MCF 10A (cell line): ENCODE measurements at regions of chr2 and their contacts with region 1.

Region 1: DNA sequence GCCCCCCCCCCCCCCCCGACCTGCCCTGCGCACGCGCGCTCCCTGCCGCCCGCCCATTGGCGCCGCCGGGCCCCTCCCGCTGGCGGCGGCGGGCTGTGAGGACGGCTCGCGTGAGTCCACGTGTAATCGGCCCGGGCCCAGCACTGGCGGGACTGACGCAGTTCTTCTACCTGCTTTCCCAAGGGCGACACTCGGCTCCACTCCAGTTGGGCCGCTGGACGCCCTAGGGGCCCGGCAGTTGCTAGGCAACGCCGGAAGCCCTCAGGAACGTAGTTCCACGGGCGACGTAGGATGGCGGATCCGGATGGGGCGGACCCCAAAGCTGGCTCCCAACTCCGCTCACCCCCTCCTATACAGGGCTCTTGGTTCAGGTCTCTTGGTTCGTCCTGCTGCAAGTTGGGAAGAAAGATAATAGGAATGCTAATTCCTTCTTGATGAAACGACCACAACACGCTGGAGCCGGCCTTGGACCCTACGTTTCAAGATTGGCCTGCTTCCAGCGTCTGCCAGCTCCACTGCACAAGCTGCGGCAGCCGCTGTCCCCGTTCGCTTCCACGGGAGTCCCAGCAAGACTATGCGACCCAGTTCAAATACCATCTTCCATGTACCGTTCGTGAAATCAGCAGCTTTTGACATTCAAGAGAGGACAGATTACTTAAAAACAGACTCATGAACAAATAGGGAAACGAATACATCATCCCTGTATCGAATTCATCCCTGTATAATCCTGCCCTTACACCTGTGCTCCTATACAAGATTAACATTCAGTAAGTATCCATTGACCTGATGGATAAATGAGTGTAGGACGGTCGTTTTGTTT is 415 bp upstream of the MCFD2 start:
- DNase-seq: peak; percentile 86
- H3K4me3 Mint-ChIP-seq: peak overlapping the region; percentile 82
- H3K27ac Mint-ChIP-seq: peak overlapping the region; percentile 63
- H3K4me1 Mint-ChIP-seq: peaks cover 42% of the 10 kb centered on the region
- H3K27me3 Mint-ChIP-seq: no peaks in the 10 kb centered on the region
- CTCF ChIP-seq: no peak

Region 2: DNA sequence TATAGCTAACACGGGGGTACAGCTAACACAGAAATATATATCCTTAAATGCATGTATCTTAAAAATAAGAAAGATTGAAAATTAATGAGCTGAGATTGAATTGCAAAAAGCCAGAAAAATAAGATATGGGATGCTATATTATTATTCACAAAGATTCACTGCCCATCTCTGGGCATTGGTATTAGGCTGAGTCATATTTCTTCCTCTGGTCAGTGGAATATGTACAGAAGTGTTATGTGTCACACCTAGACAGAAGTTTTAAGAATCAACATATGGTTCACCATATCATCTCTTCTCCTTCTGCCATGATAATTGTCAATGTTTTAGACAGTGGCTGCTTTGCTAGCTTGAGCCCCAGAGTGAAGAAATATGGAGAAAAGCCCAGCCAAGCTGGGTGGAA is 13.6 kb after region 1 on chr2:
- CTCF ChIA-PET with region 1: interaction called, 23 read pairs
- POLR2A ChIA-PET with region 1: interaction called, 17 read pairs
- intact Hi-C with region 1: no loop called
- DNase-seq: no peak
- H3K4me3 Mint-ChIP-seq: no peak overlapping the region
- H3K27ac Mint-ChIP-seq: no peak overlapping the region
- H3K4me1 Mint-ChIP-seq: no peaks in the 10 kb centered on the region
- H3K27me3 Mint-ChIP-seq: no peaks in the 10 kb centered on the region
- CTCF ChIP-seq: no peak

Region 3: DNA sequence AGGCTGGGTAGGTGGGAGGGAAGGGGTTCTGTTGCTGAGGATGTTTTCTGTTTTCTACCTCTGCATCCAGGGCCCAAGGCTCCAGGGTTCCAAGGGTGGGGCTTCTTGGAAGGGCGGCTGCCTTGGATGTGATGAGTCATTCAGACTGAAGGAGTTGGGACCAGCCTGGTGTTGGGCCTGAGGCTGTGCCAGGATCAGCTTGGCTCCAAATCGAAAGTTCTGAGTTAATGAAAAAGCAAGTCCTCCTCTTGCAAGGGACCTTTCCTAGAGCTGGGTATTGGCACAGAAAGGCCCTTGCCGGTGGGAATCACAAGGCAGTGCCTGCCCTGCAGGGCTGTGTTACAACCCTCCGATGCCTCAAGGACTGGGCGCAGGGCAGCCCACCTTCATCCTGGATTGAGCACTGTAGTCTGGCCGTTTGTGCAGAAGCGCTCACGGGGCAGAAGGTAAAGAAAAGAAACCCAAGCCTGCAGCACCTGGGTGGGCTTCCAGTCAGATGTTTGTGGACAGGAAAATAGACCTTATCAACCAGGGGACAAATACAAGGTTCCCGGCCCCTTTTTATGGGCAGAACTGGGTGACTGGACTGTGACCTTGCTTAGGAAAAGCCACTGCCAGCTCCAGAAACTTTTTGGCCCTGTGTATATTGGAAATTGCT is 52.1 kb after region 1 on chr2:
- CTCF ChIA-PET with region 1: interaction called, 13 read pairs
- POLR2A ChIA-PET with region 1: interaction called, 30 read pairs
- intact Hi-C with region 1: loop called (anchors 1 kb)
- DNase-seq: peak; percentile 96
- H3K4me3 Mint-ChIP-seq: peak overlapping the region; percentile 64
- H3K27ac Mint-ChIP-seq: peak overlapping the region; percentile 94
- H3K4me1 Mint-ChIP-seq: peaks cover 54% of the 10 kb centered on the region
- H3K27me3 Mint-ChIP-seq: no peaks in the 10 kb centered on the region
- CTCF ChIP-seq: no peak

Region 4: DNA sequence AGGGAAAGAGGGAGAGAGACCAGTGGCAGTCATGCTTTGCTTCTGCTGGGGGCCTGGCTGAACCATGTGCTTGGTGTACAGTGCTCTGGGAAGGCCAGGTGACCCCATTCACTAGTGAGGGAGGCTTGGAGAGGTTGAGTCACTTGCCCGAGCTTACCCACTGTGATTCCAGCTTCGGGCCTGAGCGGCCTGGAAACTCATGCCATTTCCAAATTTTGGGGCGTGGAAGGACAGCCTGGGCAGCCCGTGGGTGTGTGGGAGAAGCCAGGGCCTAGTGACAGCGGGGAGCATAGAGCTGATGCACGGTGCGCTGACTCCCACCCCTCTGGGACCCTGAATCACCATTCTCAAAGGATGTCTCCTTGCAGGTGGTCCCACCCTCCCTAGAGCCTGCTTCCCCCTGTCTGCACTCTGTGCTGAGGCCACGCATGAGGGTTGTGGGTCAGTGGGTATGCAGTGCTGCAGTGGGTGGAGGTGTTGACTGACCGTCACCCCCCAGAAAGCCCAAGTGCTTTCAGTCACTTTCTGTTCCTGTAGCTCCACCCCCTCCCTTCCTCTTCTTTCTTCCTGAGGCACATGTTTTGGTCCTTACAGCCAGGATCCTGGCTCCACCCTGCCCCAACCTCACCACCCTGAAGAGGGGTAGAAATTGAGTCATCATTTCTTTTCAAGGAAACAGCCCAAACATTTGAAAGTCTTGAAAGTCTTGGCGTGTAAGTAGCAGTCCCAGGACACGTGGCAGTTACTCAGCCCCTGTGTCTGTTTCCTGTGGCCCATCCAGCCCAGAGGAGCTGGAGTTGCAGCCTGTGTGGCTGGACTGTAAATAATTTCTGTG is 68.8 kb after region 1 on chr2:
- CTCF ChIA-PET with region 1: interaction called, 9 read pairs
- POLR2A ChIA-PET with region 1: no interaction called
- intact Hi-C with region 1: loop called (anchors 1 kb)
- DNase-seq: peak; percentile 93
- H3K4me3 Mint-ChIP-seq: peak overlapping the region; percentile 9
- H3K27ac Mint-ChIP-seq: peak overlapping the region; percentile 37
- H3K4me1 Mint-ChIP-seq: peaks cover 26% of the 10 kb centered on the region
- H3K27me3 Mint-ChIP-seq: no peaks in the 10 kb centered on the region
- CTCF ChIP-seq: no peak